ENCODE measurements at regions of chr16 and their contacts with region 1.

Region 1: GRCh38 chr16:57485916-57486857 is at the start of gene DOK4:
- DNase-seq: no peak
- ATAC-seq: peak; percentile 82
- H3K4me3 ChIP-seq: peak within 1 kb of the TSS; percentile 91 to 97 (median 96)
- H3K27ac ChIP-seq: peak within 1 kb of the TSS; percentile 56
- H3K4me1 ChIP-seq: peaks cover 66% of the 10 kb centered on the region
- H3K27me3 ChIP-seq: peaks cover 0 to 6% of the 10 kb centered on the region in 2 experiments; a peak in 1 of 5 replicates
- CTCF ChIP-seq: no peak
- EP300 ChIP-seq: no peak; a peak in 1 of 4 replicates
- POLR2A ChIP-seq: peak in 1 of 2 experiments; percentile 80; a peak in 2 of 4 replicates
- RAD21 ChIP-seq: no peak; the same call in 1 of the 2 replicates
- total RNA-seq, gene DOK4: 52.7 and 55.5 TPM in 2 replicates

Region 2: GRCh38 chr16:57462209-57462977 is 23.8 kb before region 1 on chr16 and contains the start of gene POLR2C:
- CTCF ChIA-PET with region 1: no interaction called
- POLR2A ChIA-PET with region 1: interaction called, 20 read pairs
- in situ Hi-C with region 1: no loop called
- intact Hi-C with region 1: no loop called
- DNase-seq: peak; percentile 80
- ATAC-seq: peak; percentile 97
- H3K4me3 ChIP-seq: peak within 1 kb of the TSS; percentile 94 to 100 (median 99)
- H3K27ac ChIP-seq: peak within 1 kb of the TSS; percentile 63
- H3K4me1 ChIP-seq: peaks cover 33% of the 10 kb centered on the region
- H3K27me3 ChIP-seq: no peaks in the 10 kb centered on the region; a peak in 1 of 5 replicates
- CTCF ChIP-seq: peak; percentile 99
- EP300 ChIP-seq: 0 out of 4 replicates have a peak, but pooled peaks of 1 of the 2 experiments have one; percentile 34
- POLR2A ChIP-seq: peak; percentile 99
- RAD21 ChIP-seq: peak; percentile 92
- total RNA-seq, gene POLR2C: 104 and 146 TPM in 2 replicates

Region 3: DNA sequence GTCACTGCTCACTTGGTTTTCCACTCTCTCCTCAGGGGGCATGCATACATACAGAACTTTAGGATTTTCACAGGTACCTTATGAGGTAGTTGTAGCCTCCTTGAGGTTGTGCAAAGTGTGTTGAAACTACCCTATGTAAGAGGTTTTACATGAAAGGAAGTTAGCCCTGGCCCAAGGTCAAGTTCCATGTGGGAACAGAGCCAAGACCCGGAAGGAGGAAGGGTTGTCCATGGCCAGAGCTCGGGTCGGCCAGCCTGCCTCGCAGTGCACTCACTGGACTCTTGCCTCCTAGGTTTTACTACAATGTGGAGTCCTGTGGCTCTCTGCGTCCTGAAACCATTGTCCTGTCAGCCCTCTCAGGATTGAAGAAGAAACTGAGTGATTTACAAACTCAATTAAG is 15.5 kb before region 1 on chr16:
- CTCF ChIA-PET with region 1: no interaction called
- POLR2A ChIA-PET with region 1: interaction called, 147 read pairs
- in situ Hi-C with region 1: no loop called
- intact Hi-C with region 1: no loop called
- DNase-seq: no peak
- ATAC-seq: no peak
- H3K4me3 ChIP-seq: no peak overlapping the region
- H3K27ac ChIP-seq: peak overlapping the region; percentile 82
- H3K4me1 ChIP-seq: peaks cover 54% of the 10 kb centered on the region
- H3K27me3 ChIP-seq: no peaks in the 10 kb centered on the region
- CTCF ChIP-seq: no peak
- EP300 ChIP-seq: no peak
- POLR2A ChIP-seq: no peak
- RAD21 ChIP-seq: no peak

Region 4: GRCh38 chr16:57513371-57514102 is 27.4 kb after region 1 on chr16:
- CTCF ChIA-PET with region 1: no interaction called
- POLR2A ChIA-PET with region 1: interaction called, 15 read pairs
- in situ Hi-C with region 1: no loop called
- intact Hi-C with region 1: no loop called
- DNase-seq: no peak
- ATAC-seq: no peak
- H3K4me3 ChIP-seq: no peak overlapping the region
- H3K27ac ChIP-seq: no peak overlapping the region
- H3K4me1 ChIP-seq: peaks cover 32% of the 10 kb centered on the region
- H3K27me3 ChIP-seq: peaks cover 2 to 9% of the 10 kb centered on the region in 2 experiments; a peak in 3 of 5 replicates
- CTCF ChIP-seq: no peak
- EP300 ChIP-seq: no peak
- POLR2A ChIP-seq: no peak
- RAD21 ChIP-seq: no peak

Measured in HepG2 (cell line).